Activated CD4-positive, alpha-beta memory T cell treated with anti-CD3 and anti-CD28 coated beads, Interleukin-2, amount 10 ng/mL, durations not matched to agents 7 days and 5 days (primary cell): ENCODE measurements at regions of chr2 and their contacts with region 1.

Region 1: GRCh38 chr2:84881581-84882414 is 914 bp upstream of the TRABD2A start:
- DNase-seq: peak; percentile 90
- H3K4me3 Mint-ChIP-seq: peak overlapping the region; percentile 91
- H3K27ac Mint-ChIP-seq: peak overlapping the region; percentile 87
- H3K4me1 Mint-ChIP-seq: peaks cover 51% of the 10 kb centered on the region
- H3K27me3 Mint-ChIP-seq: no peaks in the 10 kb centered on the region

Region 2: GRCh38 chr2:84723831-84724230 is 158.0 kb before region 1 on chr2:
- CTCF ChIA-PET with region 1: no interaction called
- POLR2A ChIA-PET with region 1: no interaction called
- DNase-seq: no peak
- H3K4me3 Mint-ChIP-seq: no peak overlapping the region
- H3K27ac Mint-ChIP-seq: no peak overlapping the region
- H3K4me1 Mint-ChIP-seq: no peaks in the 10 kb centered on the region
- H3K27me3 Mint-ChIP-seq: no peaks in the 10 kb centered on the region

Region 3: GRCh38 chr2:84741296-84741765 is 140.5 kb before region 1 on chr2:
- CTCF ChIA-PET with region 1: interaction called, 16 read pairs
- POLR2A ChIA-PET with region 1: interaction called, 7 read pairs
- DNase-seq: peak; percentile 70
- H3K4me3 Mint-ChIP-seq: no peak overlapping the region
- H3K27ac Mint-ChIP-seq: peak overlapping the region; percentile 66
- H3K4me1 Mint-ChIP-seq: peaks cover 12% of the 10 kb centered on the region
- H3K27me3 Mint-ChIP-seq: peaks cover 4% of the 10 kb centered on the region

Region 4: DNA sequence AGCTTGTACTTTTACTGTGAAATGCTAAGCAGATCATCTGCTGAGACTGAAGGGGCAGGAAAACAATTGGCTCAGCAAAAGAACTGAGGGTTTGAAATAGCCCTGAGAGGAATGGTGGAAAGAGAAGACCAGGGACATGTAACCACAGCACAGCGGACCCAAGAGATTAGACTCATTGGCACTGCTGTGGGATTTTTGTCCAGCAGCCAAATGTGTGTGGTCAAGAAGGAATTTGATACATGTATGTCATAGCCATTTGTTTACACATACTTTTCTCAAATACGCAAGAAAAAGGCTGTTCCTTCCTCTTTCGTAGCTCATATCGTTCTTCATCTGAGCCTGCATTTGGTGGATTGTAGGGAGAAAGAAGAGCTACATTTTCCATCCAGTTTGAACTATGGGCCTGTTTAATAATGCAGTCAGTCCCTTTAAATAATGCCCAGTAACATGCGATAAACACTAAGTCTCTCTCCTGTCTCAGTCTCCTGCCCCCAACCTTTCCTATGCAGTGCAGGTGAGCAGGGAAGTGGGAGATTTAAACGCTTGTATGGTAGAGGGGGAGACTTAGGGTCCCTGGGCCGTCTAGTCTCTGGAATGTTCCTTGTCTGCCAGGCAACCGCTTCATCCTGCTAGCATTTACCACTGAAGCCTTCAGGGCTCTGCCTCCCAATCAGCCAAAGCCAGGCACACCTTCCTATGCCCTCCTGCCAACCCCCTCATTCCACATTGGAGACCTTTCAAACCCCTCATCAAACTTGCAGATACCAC is 74.6 kb before region 1 on chr2:
- CTCF ChIA-PET with region 1: no interaction called
- POLR2A ChIA-PET with region 1: no interaction called
- DNase-seq: no peak
- H3K4me3 Mint-ChIP-seq: no peak overlapping the region
- H3K27ac Mint-ChIP-seq: no peak overlapping the region
- H3K4me1 Mint-ChIP-seq: no peaks in the 10 kb centered on the region
- H3K27me3 Mint-ChIP-seq: peaks cover 1% of the 10 kb centered on the region

Region 5: GRCh38 chr2:84846041-84846663 is 35.6 kb before region 1 on chr2:
- CTCF ChIA-PET with region 1: interaction called, 13 read pairs
- POLR2A ChIA-PET with region 1: interaction called, 19 read pairs
- DNase-seq: peak; percentile 41
- H3K4me3 Mint-ChIP-seq: peak overlapping the region; percentile 19
- H3K27ac Mint-ChIP-seq: peak overlapping the region; percentile 96
- H3K4me1 Mint-ChIP-seq: peaks cover 91% of the 10 kb centered on the region
- H3K27me3 Mint-ChIP-seq: no peaks in the 10 kb centered on the region

Region 6: GRCh38 chr2:84894758-84895520 is 13.1 kb after region 1 on chr2:
- CTCF ChIA-PET with region 1: interaction called, 19 read pairs
- POLR2A ChIA-PET with region 1: interaction called, 467 read pairs
- DNase-seq: no peak
- H3K4me3 Mint-ChIP-seq: peak overlapping the region; percentile 35
- H3K27ac Mint-ChIP-seq: peak overlapping the region; percentile 59
- H3K4me1 Mint-ChIP-seq: peaks cover 62% of the 10 kb centered on the region
- H3K27me3 Mint-ChIP-seq: no peaks in the 10 kb centered on the region

Region 7: GRCh38 chr2:84939426-84940087 is 57.8 kb after region 1 on chr2:
- CTCF ChIA-PET with region 1: interaction called, 7 read pairs
- POLR2A ChIA-PET with region 1: interaction called, 15 read pairs
- DNase-seq: peak; percentile 87
- H3K4me3 Mint-ChIP-seq: peak overlapping the region; percentile 72
- H3K27ac Mint-ChIP-seq: peak overlapping the region; percentile 98
- H3K4me1 Mint-ChIP-seq: peaks cover 53% of the 10 kb centered on the region
- H3K27me3 Mint-ChIP-seq: no peaks in the 10 kb centered on the region

Region 8: DNA sequence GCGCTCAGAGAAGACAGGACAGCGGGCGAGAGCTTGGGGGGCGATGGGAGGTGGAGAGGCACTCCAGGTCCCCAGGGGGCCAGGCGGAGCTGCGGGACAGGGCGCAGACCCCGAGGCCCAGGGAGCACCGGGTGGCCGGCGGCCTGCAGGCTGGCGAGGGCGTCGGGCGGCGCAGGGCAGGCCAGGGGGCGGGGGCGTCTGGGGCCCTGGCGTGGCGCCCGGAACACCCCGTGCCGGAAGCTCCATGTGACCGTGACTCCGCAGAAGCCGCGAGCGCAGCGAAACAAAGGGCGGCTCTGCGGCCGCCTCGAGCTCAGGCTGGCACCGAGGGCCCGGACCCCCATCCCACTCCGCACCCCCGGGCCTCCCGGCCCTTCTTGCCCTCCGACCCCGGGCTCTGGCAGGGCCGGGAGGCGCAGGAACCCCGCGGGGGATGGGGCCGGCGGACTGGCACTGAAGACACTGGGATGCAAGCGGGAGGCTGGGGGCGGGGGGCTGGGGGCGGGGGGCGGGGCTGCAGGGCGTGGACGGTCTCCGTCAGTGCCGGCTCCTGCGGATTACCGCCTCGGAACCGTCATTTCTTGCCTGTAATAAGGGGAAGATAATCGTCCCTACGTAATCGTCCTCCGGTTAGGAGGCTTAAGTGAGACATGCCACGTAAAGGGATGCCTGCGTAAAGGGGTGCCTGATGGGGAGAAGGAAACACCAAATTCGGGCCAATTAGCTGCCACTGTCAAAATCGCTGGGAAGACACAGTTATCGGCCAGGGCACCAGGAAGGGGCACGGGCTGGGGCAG is 555.9 kb after region 1 on chr2:
- CTCF ChIA-PET with region 1: no interaction called
- POLR2A ChIA-PET with region 1: no interaction called
- DNase-seq: peak; percentile 81
- H3K4me3 Mint-ChIP-seq: peak overlapping the region; percentile 77
- H3K27ac Mint-ChIP-seq: peak overlapping the region; percentile 89
- H3K4me1 Mint-ChIP-seq: peaks cover 40% of the 10 kb centered on the region
- H3K27me3 Mint-ChIP-seq: no peaks in the 10 kb centered on the region